ENCODE measurements at regions of chr7 and their contacts with region 1.

Region 1: DNA sequence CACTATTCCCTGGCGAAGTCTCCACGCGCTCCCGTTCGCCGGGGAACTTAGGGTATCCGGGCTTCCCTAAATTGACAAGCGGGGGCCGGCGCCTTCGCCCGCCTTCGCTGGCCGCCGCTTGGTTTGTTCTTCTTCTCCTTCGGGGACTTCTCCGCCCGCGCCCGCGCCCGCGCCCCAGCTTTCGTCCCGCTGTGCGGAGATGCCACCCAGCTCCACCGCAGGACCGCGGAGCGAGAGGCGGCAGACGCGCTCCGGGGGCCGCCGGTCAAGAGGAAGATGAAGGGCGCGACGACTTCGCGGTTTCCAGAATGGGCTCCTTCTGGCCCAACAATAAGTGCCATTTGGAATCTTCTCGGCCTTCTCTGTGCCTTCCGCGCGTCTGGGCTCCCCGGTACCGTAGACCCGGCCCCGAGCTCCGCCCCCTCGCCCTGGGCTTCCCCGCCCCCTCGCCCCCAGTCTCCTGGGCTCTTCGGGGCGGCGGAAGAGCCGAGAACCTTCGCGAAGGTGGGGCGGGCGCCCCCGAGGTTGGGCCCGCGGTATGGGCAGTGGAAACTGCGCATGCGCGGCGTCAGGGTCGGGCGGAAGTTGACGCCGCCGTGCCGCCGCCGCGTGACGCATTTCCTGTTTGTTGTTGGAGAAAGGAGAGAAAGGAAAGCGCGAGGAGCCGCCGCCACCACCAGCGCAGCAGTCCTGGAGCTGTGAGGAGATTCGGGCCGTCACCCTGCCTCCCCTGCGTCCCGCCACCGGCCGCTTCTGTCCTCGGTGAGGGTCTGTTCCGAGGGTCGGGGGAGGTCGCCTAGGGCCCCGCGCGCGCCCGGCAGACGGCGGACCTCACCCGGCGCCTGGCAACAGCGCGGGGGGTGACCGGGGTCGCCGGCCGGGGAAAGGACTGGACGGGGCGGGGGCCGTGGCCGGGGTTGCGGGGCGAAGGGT is at the start of gene DNAJB6:
- DNase-seq: peak; percentile 96 to 97 (median 97)
- H3K4me3 ChIP-seq: peak within 1 kb of the TSS; percentile 75 to 100 (median 97)
- H3K27ac ChIP-seq: peak within 1 kb of the TSS; percentile 89 to 90
- H3K4me1 ChIP-seq: peaks cover 17 to 36% (median 32%) of the 10 kb centered on the region in 4 experiments
- H3K27me3 ChIP-seq: no peaks in the 10 kb centered on the region

Region 2: GRCh38 chr7:157299613-157300368 is 36.9 kb before region 1 on chr7:
- CTCF ChIA-PET with region 1: interaction called, 17 read pairs
- POLR2A ChIA-PET with region 1: interaction called, 10 read pairs
- DNase-seq: peak; percentile 75 to 93 (median 91)
- H3K4me3 ChIP-seq: no peak overlapping the region
- H3K27ac ChIP-seq: peak overlapping the region; percentile 98 to 99
- H3K4me1 ChIP-seq: peaks cover 5 to 68% (median 59%) of the 10 kb centered on the region in 4 experiments
- H3K27me3 ChIP-seq: no peaks in the 10 kb centered on the region

Region 3: DNA sequence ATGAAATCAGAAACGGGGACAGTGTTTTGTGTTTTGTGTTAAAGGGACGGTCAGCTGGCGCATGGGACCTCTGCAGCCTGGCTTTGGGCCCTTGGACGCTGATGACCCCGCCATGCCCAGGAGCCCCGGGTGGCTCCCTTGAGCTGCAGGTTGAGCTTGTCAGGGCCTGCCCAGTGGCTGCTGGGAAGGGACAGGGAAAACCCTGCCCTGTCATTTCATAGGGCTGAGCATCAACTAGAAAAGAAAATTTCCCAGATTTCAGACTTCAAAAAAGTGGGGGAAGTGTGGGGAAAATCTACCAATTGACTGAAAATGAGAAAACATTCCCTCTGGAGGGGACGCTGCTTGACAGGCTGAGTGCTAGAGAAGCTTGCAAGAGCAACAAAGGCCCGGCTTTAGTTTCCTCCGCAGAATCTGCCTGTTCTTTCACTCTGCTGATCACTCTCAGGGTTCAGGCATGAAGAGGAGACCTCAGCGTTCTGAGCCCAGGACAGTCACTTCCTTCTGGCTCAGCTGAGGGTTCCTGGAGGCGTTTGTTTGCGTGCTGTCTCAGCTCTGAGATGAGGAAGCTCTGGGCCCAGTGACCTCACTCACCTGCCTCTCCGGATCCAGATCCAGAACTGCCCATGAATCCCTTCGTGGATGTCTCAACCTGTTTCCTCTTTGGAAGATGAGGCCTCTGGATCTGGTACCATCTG is 18.5 kb before region 1 on chr7:
- CTCF ChIA-PET with region 1: interaction called, 20 read pairs
- POLR2A ChIA-PET with region 1: interaction called, 5 read pairs
- DNase-seq: peak; percentile 70 to 90 (median 87)
- H3K4me3 ChIP-seq: peak overlapping the region in 3 of 7 experiments; percentile 26 to 45 (median 35)
- H3K27ac ChIP-seq: peak overlapping the region; percentile 80 to 86
- H3K4me1 ChIP-seq: peaks cover 3 to 40% (median 36%) of the 10 kb centered on the region in 4 experiments
- H3K27me3 ChIP-seq: no peaks in the 10 kb centered on the region

Region 4: DNA sequence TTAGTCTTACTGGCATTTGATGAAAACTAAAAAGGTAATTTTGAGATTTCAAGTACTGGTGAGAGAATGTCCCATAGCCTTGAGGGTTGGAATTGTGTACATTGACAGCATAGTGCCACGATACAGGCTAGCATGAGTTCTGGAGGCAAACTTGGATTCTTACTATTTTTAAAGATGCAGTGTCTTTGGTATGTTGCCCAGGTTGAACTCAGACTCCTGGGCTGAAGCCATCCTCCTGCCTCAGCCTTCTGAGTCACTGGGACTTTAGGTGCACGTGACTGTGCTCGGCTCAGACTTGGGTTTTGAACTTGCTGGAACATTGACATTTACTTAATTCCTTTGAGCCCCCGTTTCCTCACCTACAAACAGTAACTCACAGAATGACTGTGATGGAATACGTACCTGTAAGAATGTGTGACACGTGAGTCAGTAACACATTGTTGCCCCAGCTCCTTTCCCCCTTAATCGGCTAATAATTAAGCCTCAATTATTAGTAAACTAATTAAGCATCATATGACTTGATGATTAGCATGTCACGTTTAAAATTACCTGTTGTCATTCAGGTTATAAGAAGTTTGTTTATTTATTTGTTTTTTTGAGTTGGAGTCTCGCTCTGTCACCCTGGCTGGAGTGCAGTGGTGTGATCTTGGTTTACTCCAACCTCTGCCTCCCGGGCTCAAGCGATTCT is 10.7 kb after region 1 on chr7:
- CTCF ChIA-PET with region 1: interaction called, 14 read pairs
- POLR2A ChIA-PET with region 1: no interaction called
- DNase-seq: no peak
- H3K4me3 ChIP-seq: no peak overlapping the region
- H3K27ac ChIP-seq: no peak overlapping the region
- H3K4me1 ChIP-seq: peaks cover 0 to 35% (median 18%) of the 10 kb centered on the region in 4 experiments
- H3K27me3 ChIP-seq: no peaks in the 10 kb centered on the region

Measured in common myeloid progenitor, CD34-positive (primary cell).